ENCODE measurements at regions of chr14 and their contacts with region 1.

Region 1: GRCh38 chr14:103349982-103350381 is 15.9 kb downstream of the EIF5 start:
- DNase-seq: no peak
- H3K4me3 Mint-ChIP-seq: no peak overlapping the region
- H3K27ac Mint-ChIP-seq: no peak overlapping the region
- H3K4me1 Mint-ChIP-seq: no peaks in the 10 kb centered on the region
- H3K27me3 Mint-ChIP-seq: no peaks in the 10 kb centered on the region
- CTCF ChIP-seq: no peak

Region 2: DNA sequence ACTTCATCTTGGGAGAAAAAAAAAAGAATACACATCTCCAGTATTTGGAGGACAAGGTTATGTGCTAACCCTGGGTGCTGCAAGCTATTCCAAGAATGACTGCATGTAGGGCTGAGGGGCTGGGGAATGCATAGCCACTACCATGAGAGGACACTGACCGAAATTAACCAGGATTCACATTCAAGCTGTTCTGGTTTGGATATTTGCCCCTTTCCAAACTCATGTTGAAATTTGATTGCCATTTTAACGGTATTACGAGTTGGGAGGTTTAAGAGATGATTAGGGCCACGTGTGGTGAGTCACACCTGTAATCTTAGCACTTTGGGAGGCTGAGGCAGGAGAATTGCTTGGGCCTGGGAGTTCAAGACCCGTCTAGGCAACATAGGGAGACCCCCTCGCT is 16.8 kb after region 1 on chr14:
- CTCF ChIA-PET with region 1: no interaction called
- intact Hi-C with region 1: no loop called
- DNase-seq: no peak
- H3K4me3 Mint-ChIP-seq: no peak overlapping the region
- H3K27ac Mint-ChIP-seq: no peak overlapping the region
- H3K4me1 Mint-ChIP-seq: no peaks in the 10 kb centered on the region
- H3K27me3 Mint-ChIP-seq: no peaks in the 10 kb centered on the region
- CTCF ChIP-seq: no peak

Region 3: DNA sequence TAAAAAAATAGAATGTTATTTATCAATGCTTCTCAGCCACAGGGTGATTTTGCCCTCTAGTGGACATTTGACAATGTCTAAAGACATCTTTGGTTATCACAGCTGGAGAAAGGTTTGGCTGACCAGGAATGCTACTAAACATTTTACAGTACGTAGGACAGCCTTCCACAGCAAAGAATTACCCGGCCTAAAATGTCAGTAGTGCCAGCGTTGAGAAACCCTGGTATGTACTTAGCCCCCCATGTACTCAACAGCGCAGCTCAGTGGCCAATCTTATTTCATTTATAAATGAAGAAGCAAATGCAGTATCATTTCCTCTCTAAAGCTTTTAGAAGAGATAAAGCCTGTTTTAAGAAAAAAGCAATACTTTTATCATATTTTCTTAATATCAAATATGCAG is 41.1 kb after region 1 on chr14:
- CTCF ChIA-PET with region 1: interaction called, 5 read pairs
- intact Hi-C with region 1: loop called (anchors 5 kb)
- DNase-seq: peak; percentile 18
- H3K4me3 Mint-ChIP-seq: no peak overlapping the region
- H3K27ac Mint-ChIP-seq: no peak overlapping the region
- H3K4me1 Mint-ChIP-seq: peaks cover 16% of the 10 kb centered on the region
- H3K27me3 Mint-ChIP-seq: no peaks in the 10 kb centered on the region
- CTCF ChIP-seq: peak; percentile 63

Measured in Calu3 (cell line).